Activated naive CD4-positive, alpha-beta T cell treated with anti-CD3 and anti-CD28 coated beads for 36 hours (primary cell): ENCODE measurements at regions of chr6 and their contacts with region 1.

Region 1: DNA sequence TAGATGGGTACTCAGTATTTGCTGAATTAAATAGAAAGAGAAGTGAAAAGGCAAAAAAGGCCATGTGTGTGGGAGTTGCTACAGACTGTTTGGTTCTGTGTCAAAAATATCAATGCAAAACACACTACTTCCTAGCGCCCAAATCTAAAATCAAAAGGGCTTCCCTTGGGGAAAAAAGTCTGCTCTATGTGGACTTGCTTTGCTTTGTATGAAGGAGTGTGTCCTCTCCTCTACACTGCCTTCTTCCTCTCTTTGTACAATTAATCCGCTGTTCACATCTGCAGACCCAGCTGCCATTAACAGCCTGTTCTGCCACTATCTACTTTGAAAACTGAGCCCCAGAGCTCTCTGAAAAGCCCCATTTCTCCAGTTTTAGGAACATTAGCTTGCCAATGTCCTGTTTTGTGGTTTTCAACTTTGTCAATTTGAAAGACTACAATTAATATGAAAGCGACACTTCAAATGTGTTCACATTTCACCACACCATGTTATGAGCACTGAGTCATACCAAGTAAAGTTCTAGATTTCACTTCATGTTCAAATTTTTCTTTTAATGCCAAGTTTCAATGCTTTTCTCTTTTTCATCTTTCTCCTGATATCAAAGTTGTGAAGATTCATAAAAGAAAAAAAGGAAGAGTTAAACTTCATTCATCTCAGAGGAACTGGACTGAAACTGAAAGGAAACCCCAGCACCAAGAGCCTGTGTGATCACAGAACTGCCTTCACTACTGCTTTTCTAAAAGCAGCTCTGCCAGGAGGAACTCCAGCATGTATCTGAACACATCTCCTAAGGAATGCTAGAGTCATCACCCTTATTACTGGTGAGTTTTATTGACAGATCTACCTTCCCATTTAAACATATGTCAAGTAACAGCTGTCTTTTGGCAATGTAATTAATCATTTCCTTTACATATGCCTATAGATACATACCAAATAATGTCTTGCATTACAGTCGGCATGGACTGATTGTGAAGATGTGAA is 102.6 kb downstream of the KIF13A start:
- DNase-seq: peak; percentile 30
- H3K4me3 Mint-ChIP-seq: no peak overlapping the region
- H3K27ac Mint-ChIP-seq: no peak overlapping the region
- H3K4me1 Mint-ChIP-seq: peaks cover 21% of the 10 kb centered on the region
- H3K27me3 Mint-ChIP-seq: peaks cover 49% of the 10 kb centered on the region

Region 2: DNA sequence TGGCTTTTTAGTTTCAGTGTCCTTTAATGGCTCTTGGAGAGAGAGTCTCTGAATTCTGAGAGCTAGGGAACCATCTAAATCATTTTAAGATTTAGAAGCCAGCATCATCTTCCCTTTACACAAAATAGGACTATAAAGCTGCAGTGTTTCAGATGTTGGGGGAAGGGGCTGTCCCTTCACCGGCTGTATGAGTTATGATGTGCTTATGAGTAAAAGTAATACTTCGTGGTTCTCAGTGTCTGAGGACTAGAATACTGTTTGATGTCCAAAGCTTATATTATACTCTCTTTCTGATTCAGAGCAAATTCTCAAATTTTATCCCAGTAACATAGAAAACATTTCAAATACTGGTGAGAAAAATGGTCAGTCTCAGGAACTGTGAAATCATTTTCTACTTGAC is 348.2 kb before region 1 on chr6:
- CTCF ChIA-PET with region 1: no interaction called
- intact Hi-C with region 1: loop called (anchors 1 kb)
- DNase-seq: peak; percentile 68
- H3K4me3 Mint-ChIP-seq: no peak overlapping the region
- H3K27ac Mint-ChIP-seq: no peak overlapping the region
- H3K4me1 Mint-ChIP-seq: peaks cover 5% of the 10 kb centered on the region
- H3K27me3 Mint-ChIP-seq: peaks cover 21% of the 10 kb centered on the region

Region 3: GRCh38 chr6:17987576-17988421 is 103.0 kb after region 1 on chr6 and contains the start of gene KIF13A:
- CTCF ChIA-PET with region 1: no interaction called
- intact Hi-C with region 1: loop called (anchors 1 kb)
- DNase-seq: peak; percentile 48
- H3K4me3 Mint-ChIP-seq: peak within 1 kb of the TSS; percentile 77
- H3K27ac Mint-ChIP-seq: no peak within 1 kb of the TSS
- H3K4me1 Mint-ChIP-seq: peaks cover 5% of the 10 kb centered on the region
- H3K27me3 Mint-ChIP-seq: peaks cover 64% of the 10 kb centered on the region
- total RNA-seq, gene KIF13A: not detected

Region 4: GRCh38 chr6:18147160-18147559 is 262.4 kb after region 1 on chr6:
- CTCF ChIA-PET with region 1: no interaction called
- intact Hi-C with region 1: loop called (anchors 2 kb)
- DNase-seq: peak; percentile 14
- H3K4me3 Mint-ChIP-seq: no peak overlapping the region
- H3K27ac Mint-ChIP-seq: no peak overlapping the region
- H3K4me1 Mint-ChIP-seq: peaks cover 12% of the 10 kb centered on the region
- H3K27me3 Mint-ChIP-seq: no peaks in the 10 kb centered on the region

Region 5: GRCh38 chr6:18488526-18489270 is 603.9 kb after region 1 on chr6:
- CTCF ChIA-PET with region 1: no interaction called
- intact Hi-C with region 1: loop called (anchors 5 kb)
- DNase-seq: no peak
- H3K4me3 Mint-ChIP-seq: no peak overlapping the region
- H3K27ac Mint-ChIP-seq: no peak overlapping the region
- H3K4me1 Mint-ChIP-seq: peaks cover 13% of the 10 kb centered on the region
- H3K27me3 Mint-ChIP-seq: peaks cover 14% of the 10 kb centered on the region